GM13977 (cell line): ENCODE measurements at regions of chr2 and their contacts with region 1.

Region 1: DNA sequence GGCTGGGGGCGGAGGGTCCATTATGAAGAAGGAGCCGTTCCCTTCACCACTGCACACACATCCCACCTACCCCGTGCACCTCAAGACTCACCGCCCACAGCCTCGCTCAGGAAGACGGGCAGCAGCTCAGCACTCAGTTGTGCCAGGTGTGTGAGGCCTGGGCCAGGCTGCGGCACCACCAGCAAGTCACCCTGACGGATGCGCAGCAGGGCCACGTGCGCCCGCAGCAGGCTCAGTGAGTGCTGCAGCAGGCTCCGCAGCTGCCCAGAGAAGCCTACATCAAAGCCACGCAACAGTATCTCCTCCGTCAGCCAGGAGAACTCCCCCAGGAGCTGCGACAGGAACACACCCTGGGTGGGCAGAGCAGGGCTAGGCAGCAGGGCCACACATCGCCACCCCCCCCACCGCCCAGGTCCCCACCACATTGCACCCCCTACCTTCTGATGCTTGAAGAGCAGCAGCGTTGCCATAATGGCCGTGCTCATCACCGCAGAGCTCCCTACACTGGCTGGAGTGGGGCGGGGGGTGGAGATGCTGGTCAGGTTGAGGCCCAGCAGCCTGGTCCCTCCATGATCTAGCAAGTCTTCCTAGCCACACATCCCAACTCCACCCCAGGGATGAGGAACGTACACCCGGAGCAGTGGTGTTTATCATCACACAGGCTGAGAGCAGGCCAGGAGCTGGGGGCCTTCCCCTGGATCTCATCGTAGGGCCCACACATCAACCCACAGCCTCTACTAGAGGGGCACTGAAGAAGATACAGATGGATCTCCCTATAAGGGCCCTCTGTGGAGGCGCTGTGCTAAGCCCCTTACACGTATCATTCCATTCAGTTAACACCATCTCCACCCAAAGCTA is 10.2 kb downstream of the GPAT2 start:
- DNase-seq: peak; percentile 1
- CTCF ChIP-seq: no peak

Region 2: DNA sequence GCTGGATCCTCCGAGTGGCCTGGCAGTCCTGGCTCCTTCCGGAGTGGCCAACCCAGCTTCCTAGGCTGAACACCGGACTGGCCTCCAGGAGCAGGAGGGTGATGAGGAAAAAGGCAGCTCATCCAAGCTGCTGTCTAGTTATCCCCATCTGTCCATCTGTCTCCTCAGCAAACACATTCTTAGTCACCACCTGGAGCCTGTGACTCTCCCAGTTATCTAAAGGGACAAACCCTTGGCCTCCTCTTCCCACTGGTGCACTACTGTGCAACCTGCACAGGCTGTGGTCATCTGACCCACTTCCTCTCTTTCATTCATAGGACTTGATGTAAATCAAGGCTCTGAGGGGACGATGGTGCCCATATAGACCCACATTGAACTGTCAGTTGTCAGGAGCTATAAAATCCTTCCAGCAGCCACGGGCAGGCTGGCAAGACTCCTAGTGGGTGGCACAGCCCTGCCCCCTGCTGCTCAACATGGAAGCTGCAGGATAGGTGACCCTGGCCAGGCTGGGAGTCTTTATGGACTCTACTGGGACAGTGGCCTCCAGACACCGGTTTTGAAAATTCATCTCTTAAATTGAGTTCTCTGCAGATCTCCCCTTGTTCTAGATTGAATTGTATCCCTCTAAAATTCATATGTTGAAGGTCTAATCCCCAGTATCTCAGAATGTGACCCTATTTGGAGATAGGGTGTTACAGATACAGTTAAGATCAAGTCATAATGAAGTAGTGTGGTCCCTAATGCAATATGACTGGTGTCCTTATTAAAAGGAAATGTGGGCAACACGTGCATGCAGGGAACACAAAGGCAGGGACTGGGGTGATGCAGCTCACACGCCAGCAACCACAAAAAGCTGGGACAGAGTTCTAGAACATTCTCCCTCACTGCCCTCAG is 149.9 kb after region 1 on chr2:
- in situ Hi-C with region 1: loop called (anchors 25 kb)
- DNase-seq: peak; percentile 72
- CTCF ChIP-seq: peak; percentile 96

Region 3: GRCh38 chr2:96396095-96396494 is 371.5 kb after region 1 on chr2:
- in situ Hi-C with region 1: no loop called
- DNase-seq: no peak
- CTCF ChIP-seq: no peak

Region 4: GRCh38 chr2:96907115-96908041 is 882.8 kb after region 1 on chr2:
- in situ Hi-C with region 1: no loop called
- DNase-seq: no peak
- CTCF ChIP-seq: no peak

Region 5: DNA sequence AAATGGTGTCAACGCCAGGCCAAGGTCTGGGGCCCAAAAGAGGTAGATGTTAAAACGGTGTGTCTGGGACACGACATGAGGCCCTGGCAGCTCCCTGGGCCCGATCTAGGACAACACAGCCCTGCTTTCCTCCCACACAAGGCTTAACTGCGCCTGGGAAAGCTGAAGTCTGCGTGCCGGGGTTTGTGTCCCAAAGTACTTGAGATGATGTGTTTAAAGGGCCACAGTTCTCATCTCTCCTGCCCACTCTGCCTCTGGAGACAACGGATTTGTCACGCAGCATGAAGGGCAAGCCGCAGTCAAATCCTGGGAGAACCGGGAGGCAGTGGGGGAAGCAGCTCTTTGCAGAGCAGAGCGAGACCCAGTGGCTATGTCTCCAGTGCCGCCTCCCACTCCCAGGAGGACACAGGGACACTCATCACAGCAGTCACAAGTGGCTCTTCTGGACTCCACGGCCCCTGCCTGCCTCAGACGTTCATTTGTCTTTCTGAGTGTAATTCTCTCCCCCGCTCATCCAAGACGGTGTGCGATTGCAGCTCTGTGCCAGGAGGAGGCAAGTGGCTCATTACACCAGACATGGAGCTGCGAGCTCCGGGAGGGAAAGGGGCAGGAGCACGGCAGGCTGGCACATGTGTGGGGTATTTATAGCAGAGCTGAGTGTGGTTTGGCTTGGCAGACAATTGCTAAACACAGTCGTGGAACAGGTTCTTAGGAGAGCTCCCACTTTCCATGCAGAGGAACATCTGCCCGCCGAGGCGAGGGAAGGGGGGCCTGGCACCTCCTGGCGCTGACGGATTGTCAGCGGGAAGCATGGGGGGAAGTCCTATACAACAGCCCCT is 903.1 kb after region 1 on chr2:
- in situ Hi-C with region 1: no loop called
- DNase-seq: no peak
- CTCF ChIP-seq: no peak